Activated T-helper 1 cell treated with anti-CD3 and anti-CD28 coated beads, Interleukin-12 subunit alpha, Interleukin-12 subunit beta, Interleukin-2, Interleukin-4 antibody, amounts not matched to agents 30 ng/mL and 10 ng/mL and 1 ng/mL, durations not matched to agents 14 hours and 24 hours and 36 hours (primary cell): ENCODE measurements at regions of chr21 and their contacts with region 1.

Region 1: GRCh38 chr21:32826329-32827167 is 55.0 kb upstream of the PAXBP1 start:
- DNase-seq: peak; percentile 23
- H3K4me3 Mint-ChIP-seq: no peak overlapping the region
- H3K27ac Mint-ChIP-seq: no peak overlapping the region
- H3K4me1 Mint-ChIP-seq: no peaks in the 10 kb centered on the region
- H3K27me3 Mint-ChIP-seq: peaks cover 10% of the 10 kb centered on the region

Region 2: GRCh38 chr21:32520875-32521735 is 305.4 kb before region 1 on chr21:
- intact Hi-C with region 1: no loop called
- DNase-seq: no peak
- H3K4me3 Mint-ChIP-seq: no peak overlapping the region
- H3K27ac Mint-ChIP-seq: no peak overlapping the region
- H3K4me1 Mint-ChIP-seq: no peaks in the 10 kb centered on the region
- H3K27me3 Mint-ChIP-seq: peaks cover 3% of the 10 kb centered on the region

Region 3: GRCh38 chr21:32653311-32653901 is 173.1 kb before region 1 on chr21:
- intact Hi-C with region 1: loop called (anchors 1 kb)
- DNase-seq: no peak
- H3K4me3 Mint-ChIP-seq: no peak overlapping the region
- H3K27ac Mint-ChIP-seq: peak overlapping the region; percentile 5
- H3K4me1 Mint-ChIP-seq: peaks cover 9% of the 10 kb centered on the region
- H3K27me3 Mint-ChIP-seq: no peaks in the 10 kb centered on the region

Region 4: GRCh38 chr21:32687643-32688345 is 138.8 kb before region 1 on chr21:
- intact Hi-C with region 1: no loop called
- DNase-seq: no peak
- H3K4me3 Mint-ChIP-seq: no peak overlapping the region
- H3K27ac Mint-ChIP-seq: no peak overlapping the region
- H3K4me1 Mint-ChIP-seq: no peaks in the 10 kb centered on the region
- H3K27me3 Mint-ChIP-seq: no peaks in the 10 kb centered on the region

Region 5: GRCh38 chr21:32712043-32712442 is 114.5 kb before region 1 on chr21:
- intact Hi-C with region 1: loop called (anchors 1 kb)
- DNase-seq: peak; percentile 20
- H3K4me3 Mint-ChIP-seq: no peak overlapping the region
- H3K27ac Mint-ChIP-seq: no peak overlapping the region
- H3K4me1 Mint-ChIP-seq: peaks cover 22% of the 10 kb centered on the region
- H3K27me3 Mint-ChIP-seq: no peaks in the 10 kb centered on the region

Region 6: GRCh38 chr21:32782698-32783097 is 43.9 kb before region 1 on chr21:
- intact Hi-C with region 1: loop called (anchors 2 kb)
- DNase-seq: no peak
- H3K4me3 Mint-ChIP-seq: no peak overlapping the region
- H3K27ac Mint-ChIP-seq: no peak overlapping the region
- H3K4me1 Mint-ChIP-seq: no peaks in the 10 kb centered on the region
- H3K27me3 Mint-ChIP-seq: peaks cover 4% of the 10 kb centered on the region

Region 7: GRCh38 chr21:32813265-32813903 is 13.2 kb before region 1 on chr21:
- intact Hi-C with region 1: no loop called
- DNase-seq: no peak
- H3K4me3 Mint-ChIP-seq: no peak overlapping the region
- H3K27ac Mint-ChIP-seq: no peak overlapping the region
- H3K4me1 Mint-ChIP-seq: no peaks in the 10 kb centered on the region
- H3K27me3 Mint-ChIP-seq: peaks cover 10% of the 10 kb centered on the region